ENCODE measurements at regions of chr1 and their contacts with region 1.

Region 1: GRCh38 chr1:93814059-93814794 is 64.8 kb downstream of the DNTTIP2 start:
- DNase-seq: peak; percentile 65
- ATAC-seq: peak; percentile 75
- H3K4me3 Mint-ChIP-seq: no peak overlapping the region
- H3K27ac Mint-ChIP-seq: no peak overlapping the region
- H3K4me1 Mint-ChIP-seq: peaks cover 57% of the 10 kb centered on the region
- H3K27me3 Mint-ChIP-seq: no peaks in the 10 kb centered on the region
- CTCF ChIP-seq: peak; percentile 65

Region 2: GRCh38 chr1:93304716-93305138 is 509.5 kb before region 1 on chr1:
- CTCF ChIA-PET with region 1: interaction called, 15 read pairs
- POLR2A ChIA-PET with region 1: no interaction called
- DNase-seq: peak; percentile 26
- ATAC-seq: peak; percentile 52; the same call in 1 of the 2 replicates
- H3K4me3 Mint-ChIP-seq: no peak overlapping the region
- H3K27ac Mint-ChIP-seq: no peak overlapping the region; the same call in 1 of the 2 replicates
- H3K4me1 Mint-ChIP-seq: peaks cover 26% of the 10 kb centered on the region
- H3K27me3 Mint-ChIP-seq: no peaks in the 10 kb centered on the region
- CTCF ChIP-seq: peak; percentile 86

Region 3: DNA sequence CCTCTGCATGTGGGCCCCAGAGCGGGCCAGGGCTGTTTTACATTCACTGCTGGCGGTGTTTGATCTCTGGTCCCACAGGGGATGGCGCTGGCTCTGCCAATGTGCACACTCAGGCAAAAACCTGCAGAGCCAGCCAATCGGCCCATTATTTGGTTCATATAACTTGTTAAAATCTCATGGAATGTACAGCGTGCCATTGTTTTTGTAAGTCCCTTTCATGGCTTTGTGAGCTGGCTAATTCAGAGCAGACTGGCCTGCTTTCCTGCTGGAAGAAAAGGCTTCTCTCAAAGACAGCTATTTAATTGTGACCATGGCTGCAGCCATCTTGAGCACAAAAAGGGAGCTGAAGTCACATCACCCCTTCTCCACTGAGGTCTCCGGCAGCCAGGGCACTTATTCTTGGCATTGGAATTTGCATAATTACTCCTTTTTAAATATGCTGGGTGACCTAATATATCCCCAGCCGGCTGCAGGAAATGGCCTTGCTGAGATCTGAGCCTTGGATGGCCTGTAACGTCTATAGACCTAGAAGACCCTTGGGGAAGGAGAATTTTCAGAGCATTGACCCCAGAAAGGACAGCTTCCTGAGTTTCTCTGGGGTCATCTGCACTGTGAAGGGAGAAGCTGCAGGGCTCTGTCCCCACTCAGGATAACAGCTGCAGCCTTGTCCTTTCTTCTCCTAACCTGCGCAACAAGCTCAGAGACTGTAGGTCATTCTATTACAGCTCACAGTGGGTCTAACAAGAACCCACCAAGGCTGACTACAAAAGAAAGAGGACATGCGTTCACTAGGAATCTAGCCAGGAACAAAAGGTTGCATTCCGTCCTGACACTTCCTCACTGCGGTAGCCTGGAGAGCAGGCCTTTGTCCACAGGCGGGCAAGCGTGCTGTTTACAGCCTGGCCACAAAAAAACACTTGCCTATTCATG is 178.3 kb before region 1 on chr1:
- CTCF ChIA-PET with region 1: interaction called, 240 read pairs
- POLR2A ChIA-PET with region 1: no interaction called
- DNase-seq: peak; percentile 61
- ATAC-seq: peak; percentile 90
- H3K4me3 Mint-ChIP-seq: peak overlapping the region; percentile 25; the same call in 1 of the 2 replicates
- H3K27ac Mint-ChIP-seq: peak overlapping the region; percentile 97
- H3K4me1 Mint-ChIP-seq: peaks cover 36% of the 10 kb centered on the region
- H3K27me3 Mint-ChIP-seq: no peaks in the 10 kb centered on the region
- CTCF ChIP-seq: no peak

Region 4: DNA sequence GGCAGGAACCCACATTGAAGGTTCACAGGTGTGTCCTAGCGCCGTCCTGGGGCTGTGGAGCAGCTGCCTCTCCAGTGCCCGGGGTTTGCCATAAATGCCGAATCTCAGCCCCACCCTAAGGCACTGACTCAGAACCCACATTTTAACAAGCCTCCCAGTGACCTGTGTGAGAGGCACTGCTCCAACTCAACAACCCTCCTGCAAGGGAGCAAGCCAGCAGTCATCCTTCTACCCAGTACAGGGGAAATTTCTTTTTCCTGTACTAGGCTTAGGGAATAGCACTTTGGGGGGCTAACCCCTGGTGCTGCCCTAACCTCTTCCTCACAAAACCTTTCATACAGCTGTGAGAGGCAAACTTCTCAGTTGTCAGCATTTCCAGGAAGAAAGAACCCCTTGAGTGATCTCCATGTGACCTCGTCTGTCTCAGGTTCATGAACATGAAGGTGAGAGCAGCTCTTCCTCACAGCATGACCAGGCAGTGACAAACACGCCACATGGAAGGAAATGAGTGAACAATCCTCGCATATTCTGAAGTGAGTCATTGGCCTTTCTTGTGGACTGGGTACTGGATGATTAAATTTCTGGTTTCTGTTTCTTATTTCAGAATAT is 121.1 kb before region 1 on chr1:
- CTCF ChIA-PET with region 1: interaction called, 13 read pairs
- POLR2A ChIA-PET with region 1: no interaction called
- DNase-seq: no peak
- ATAC-seq: no peak
- H3K4me3 Mint-ChIP-seq: no peak overlapping the region
- H3K27ac Mint-ChIP-seq: no peak overlapping the region
- H3K4me1 Mint-ChIP-seq: peaks cover 20% of the 10 kb centered on the region
- H3K27me3 Mint-ChIP-seq: no peaks in the 10 kb centered on the region
- CTCF ChIP-seq: no peak

Region 5: DNA sequence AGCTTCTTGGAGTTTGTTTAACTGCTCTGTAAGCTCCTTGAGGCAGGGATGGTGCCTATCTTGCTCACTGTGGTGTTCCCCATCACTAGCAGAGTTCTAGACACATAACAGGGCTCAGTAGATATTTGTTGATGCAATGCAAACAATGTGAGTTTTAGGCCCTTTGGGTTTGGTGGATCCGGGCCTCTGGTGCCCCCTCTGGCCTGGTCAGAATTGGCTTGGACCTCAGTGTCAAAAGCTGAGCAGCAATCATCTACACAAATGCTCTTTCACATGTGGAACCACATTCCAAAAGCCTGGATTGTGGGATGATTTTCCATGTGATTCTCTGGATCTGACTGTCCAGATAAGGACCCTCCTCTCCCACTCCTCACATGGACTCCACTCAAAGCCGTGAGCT is 79.2 kb before region 1 on chr1:
- CTCF ChIA-PET with region 1: interaction called, 11 read pairs
- POLR2A ChIA-PET with region 1: no interaction called
- DNase-seq: no peak
- ATAC-seq: peak; percentile 59
- H3K4me3 Mint-ChIP-seq: no peak overlapping the region
- H3K27ac Mint-ChIP-seq: no peak overlapping the region
- H3K4me1 Mint-ChIP-seq: peaks cover 18% of the 10 kb centered on the region
- H3K27me3 Mint-ChIP-seq: no peaks in the 10 kb centered on the region; the same call in 1 of the 2 replicates
- CTCF ChIP-seq: no peak

Region 6: DNA sequence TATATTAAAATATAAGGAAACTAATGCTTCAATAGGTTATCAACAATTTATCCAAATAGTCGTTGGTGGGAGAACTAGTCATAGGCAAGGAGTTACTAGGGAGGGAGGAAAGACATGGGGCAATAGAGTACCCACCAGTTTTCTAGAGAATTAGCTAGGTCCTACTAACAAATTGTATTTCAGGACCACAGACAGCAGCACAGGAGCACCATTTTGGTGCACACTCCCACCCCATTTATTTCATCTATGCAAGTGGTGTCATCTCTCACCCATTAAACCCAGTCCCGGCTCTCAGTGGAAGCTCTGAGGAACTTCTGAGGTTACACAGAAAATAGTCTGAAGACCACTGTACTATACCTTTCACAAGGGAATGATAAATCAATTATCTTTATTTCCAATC is 43.6 kb before region 1 on chr1:
- CTCF ChIA-PET with region 1: interaction called, 11 read pairs
- POLR2A ChIA-PET with region 1: no interaction called
- DNase-seq: no peak
- ATAC-seq: 0 out of 2 replicates have a peak, but pooled peaks have one; percentile 18
- H3K4me3 Mint-ChIP-seq: no peak overlapping the region
- H3K27ac Mint-ChIP-seq: no peak overlapping the region
- H3K4me1 Mint-ChIP-seq: peaks cover 35% of the 10 kb centered on the region
- H3K27me3 Mint-ChIP-seq: no peaks in the 10 kb centered on the region
- CTCF ChIP-seq: no peak

Measured in WTC11 (cell line).